ENCODE measurements at regions of chr17 and their contacts with region 1.

Region 1: DNA sequence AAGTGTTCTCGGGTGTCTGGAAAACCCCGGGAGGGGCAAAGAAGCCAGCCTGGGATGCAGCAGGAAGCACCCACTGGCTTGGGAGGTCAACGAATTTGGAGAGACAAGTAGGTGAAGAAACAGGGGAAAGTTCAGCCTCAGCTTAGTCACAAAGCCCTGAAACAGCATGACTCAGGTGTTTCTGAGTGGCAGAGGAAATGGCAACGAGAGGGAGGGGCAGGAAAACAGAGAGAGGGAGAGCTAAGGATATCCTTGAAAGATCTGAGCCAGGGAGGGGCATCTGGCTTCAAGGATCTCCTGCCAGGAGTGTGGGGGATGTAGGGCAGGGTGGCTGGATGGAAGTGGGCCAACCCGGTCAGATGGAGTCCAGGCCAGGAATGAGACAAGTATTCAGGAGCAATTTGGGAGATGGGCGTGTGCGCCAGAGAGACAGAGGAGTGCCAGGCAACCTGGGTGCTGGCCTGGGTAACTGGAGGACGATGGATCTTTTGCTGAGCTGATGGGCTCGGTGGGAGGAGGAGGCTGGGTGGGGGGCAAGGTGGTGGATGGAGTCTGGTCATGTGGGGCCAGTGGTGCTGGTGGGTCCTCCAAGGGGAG is 27.2 kb downstream of the ABCC3 start:
- DNase-seq: peak; percentile 93
- ATAC-seq: peak; percentile 42
- H3K4me3 ChIP-seq: peak overlapping the region in 1 of 3 experiments; percentile 11; a peak in 2 of 6 replicates
- H3K27ac ChIP-seq: peak overlapping the region; percentile 82
- H3K4me1 ChIP-seq: peaks cover 76% of the 10 kb centered on the region
- H3K27me3 ChIP-seq: no peaks in the 10 kb centered on the region
- CTCF ChIP-seq: no peak
- EP300 ChIP-seq: peak; percentile 31 to 94; a peak in 3 of 4 replicates
- POLR2A ChIP-seq: peak in 1 of 2 experiments; percentile 48; a peak in 1 of 4 replicates
- RAD21 ChIP-seq: no peak

Region 2: DNA sequence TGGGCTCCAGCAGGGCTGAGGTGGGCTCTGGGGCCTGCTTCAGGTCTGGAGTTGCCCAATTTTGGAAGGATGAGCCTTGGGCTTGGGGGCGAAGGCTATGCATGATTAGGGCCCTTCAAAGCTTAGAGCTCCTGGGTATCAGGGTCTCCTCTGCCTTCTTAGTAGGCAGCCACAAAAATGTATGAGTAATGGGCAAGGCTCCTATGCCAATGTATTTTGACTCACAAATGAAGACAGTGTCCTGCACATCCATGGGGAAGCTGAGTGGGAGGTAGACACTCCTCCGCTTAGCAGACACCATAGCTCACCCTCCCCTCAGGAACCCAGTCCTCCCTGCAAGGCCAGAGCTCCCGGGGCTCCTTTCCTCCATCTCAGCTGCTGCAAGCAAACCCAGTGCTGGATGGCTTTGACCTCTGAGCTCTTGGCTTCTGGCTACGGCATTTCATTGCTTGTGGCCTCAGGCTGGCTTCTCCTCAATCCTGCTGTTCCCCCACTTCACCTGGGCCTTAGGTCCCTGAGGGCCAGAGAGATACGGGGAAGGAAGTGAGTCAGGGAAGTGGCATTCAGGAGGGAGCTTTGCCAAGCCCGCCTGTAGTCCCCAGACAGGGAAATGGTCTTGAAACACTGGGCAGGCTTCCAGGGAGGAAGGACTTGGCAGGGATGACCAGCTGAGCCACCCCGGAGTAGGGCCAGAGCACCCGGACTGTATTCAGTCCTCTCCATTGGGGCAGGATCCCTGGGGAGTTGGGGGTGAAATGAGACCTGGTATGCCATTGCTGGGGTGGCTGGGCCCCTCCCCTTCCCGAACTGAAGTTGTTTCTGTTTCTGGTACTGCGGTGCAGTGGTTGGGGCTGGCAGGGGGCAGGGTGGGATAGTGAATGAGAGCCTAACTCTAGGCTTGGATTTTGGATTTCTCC is 22.8 kb before region 1 on chr17:
- CTCF ChIA-PET with region 1: no interaction called
- POLR2A ChIA-PET with region 1: interaction called, 88 read pairs
- in situ Hi-C with region 1: no loop called
- intact Hi-C with region 1: no loop called
- DNase-seq: peak; percentile 58
- ATAC-seq: peak; percentile 1; the same call in 2 of the 3 replicates
- H3K4me3 ChIP-seq: peak overlapping the region in 1 of 3 experiments; percentile 45; a peak in 2 of 6 replicates
- H3K27ac ChIP-seq: peak overlapping the region; percentile 56
- H3K4me1 ChIP-seq: peaks cover 95% of the 10 kb centered on the region
- H3K27me3 ChIP-seq: peaks cover 0 to 3% of the 10 kb centered on the region in 2 experiments; a peak in 2 of 5 replicates
- CTCF ChIP-seq: no peak
- EP300 ChIP-seq: no peak; a peak in 1 of 4 replicates
- POLR2A ChIP-seq: no peak
- RAD21 ChIP-seq: no peak

Region 3: GRCh38 chr17:50647187-50647586 is 14.7 kb before region 1 on chr17:
- CTCF ChIA-PET with region 1: no interaction called
- POLR2A ChIA-PET with region 1: interaction called, 12 read pairs
- in situ Hi-C with region 1: no loop called
- intact Hi-C with region 1: no loop called
- DNase-seq: no peak
- ATAC-seq: no peak
- H3K4me3 ChIP-seq: no peak overlapping the region
- H3K27ac ChIP-seq: no peak overlapping the region
- H3K4me1 ChIP-seq: peaks cover 49% of the 10 kb centered on the region
- H3K27me3 ChIP-seq: no peaks in the 10 kb centered on the region
- CTCF ChIP-seq: no peak
- EP300 ChIP-seq: no peak
- POLR2A ChIP-seq: no peak
- RAD21 ChIP-seq: no peak

Region 4: GRCh38 chr17:50681263-50682210 is 19.6 kb after region 1 on chr17:
- CTCF ChIA-PET with region 1: no interaction called
- POLR2A ChIA-PET with region 1: interaction called, 140 read pairs
- in situ Hi-C with region 1: no loop called
- intact Hi-C with region 1: loop called (anchors 2 kb)
- DNase-seq: peak; percentile 69
- ATAC-seq: 0 out of 3 replicates have a peak, but pooled peaks have one; percentile 1
- H3K4me3 ChIP-seq: no peak overlapping the region
- H3K27ac ChIP-seq: no peak overlapping the region
- H3K4me1 ChIP-seq: peaks cover 86% of the 10 kb centered on the region
- H3K27me3 ChIP-seq: no peaks in the 10 kb centered on the region; a peak in 1 of 5 replicates
- CTCF ChIP-seq: peak; percentile 78
- EP300 ChIP-seq: no peak
- POLR2A ChIP-seq: no peak
- RAD21 ChIP-seq: peak; percentile 83

Measured in HepG2 (cell line).